ENCODE measurements at regions of chr9 and their contacts with region 1.

Region 1: DNA sequence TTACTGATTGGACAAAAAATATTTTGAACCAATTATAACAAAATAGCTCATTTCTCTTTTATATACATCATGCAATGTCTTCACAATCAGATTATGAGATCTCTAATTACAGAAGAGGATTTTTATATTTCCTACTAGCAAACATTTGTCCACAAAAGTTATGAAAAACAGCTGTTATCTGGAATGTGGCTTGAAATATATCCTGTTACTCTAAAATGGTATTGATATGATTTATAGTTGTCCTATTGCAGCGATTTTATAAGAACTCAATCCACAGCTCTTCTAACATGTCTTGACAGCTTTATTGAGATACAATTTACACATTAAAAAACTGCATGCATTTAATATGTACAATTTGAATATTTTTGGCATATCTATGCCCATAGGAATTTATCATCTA is 779.9 kb upstream of the ACO1 start:
- DNase-seq: no peak
- ATAC-seq: no peak
- H3K4me3 ChIP-seq: no peak overlapping the region
- H3K27ac ChIP-seq: no peak overlapping the region
- H3K4me1 ChIP-seq: no peaks in the 10 kb centered on the region
- H3K27me3 ChIP-seq: no peaks in the 10 kb centered on the region
- CTCF ChIP-seq: no peak
- POLR2A ChIP-seq: no peak

Region 2: DNA sequence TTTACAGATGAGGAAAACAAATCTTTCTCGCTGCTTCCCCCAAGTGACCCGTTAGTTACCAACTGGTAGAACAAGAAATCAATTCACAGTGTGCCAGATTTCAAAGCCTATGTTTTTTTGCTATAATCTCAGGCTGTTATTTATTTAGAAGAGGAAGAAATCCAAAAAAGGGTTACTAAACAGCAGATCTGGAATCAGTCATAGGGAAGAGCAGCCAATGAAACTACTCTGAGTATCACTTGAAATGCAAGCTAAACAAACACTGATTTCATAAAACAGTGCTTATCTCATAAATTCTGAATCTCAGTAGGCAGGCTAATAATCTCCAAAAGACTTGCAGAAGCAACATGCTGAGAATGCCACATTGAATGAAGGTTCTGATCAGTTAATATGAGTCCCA is 49.6 kb before region 1 on chr9:
- intact Hi-C with region 1: loop called in 1 of 10 experiments (anchors 5 kb)
- DNase-seq: no peak
- ATAC-seq: no peak
- H3K4me3 ChIP-seq: no peak overlapping the region
- H3K27ac ChIP-seq: no peak overlapping the region
- H3K4me1 ChIP-seq: no peaks in the 10 kb centered on the region
- H3K27me3 ChIP-seq: no peaks in the 10 kb centered on the region
- CTCF ChIP-seq: no peak
- POLR2A ChIP-seq: no peak